ENCODE measurements at regions of chr5 and their contacts with region 1.

Region 1: DNA sequence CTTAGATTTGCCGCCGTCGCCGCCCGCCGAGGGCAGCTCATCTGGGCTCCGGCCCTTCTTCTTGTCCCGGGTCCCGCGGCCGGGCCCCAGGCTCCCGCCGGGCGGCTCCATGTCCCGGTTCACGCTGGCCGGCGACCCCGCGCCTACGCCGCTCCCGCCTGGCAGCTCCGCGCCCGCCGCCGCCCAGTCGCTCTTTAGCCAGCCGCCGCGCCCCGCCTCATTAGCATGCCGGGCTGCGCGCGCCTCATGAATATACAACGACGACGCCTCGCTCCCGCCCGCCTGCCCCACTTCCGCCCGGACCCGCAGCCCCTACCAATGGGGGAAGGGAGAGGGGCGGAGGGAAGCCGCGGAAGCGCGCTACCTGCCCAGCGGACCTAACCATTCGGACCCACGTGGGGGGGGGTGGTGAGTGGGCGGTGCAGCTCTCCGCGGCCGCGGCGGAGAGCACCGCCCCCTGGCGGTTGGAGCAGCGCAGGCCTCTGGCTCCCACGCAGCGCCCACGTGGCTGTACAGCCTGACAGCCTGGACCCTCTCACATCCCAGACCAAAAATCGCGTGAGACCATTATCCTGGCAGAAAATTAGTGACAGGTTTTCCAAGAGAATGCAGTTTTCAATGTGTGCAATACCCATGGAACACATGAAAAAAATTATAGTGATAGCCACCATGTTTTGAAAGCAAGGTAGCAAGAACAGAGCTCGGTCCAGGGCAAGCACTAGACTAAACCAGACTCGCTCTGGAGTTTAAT is at the start of gene DIAPH1:
- DNase-seq: peak; percentile 88
- H3K4me3 ChIP-seq: peak within 1 kb of the TSS; percentile 74
- H3K27ac ChIP-seq: peak within 1 kb of the TSS; percentile 47
- H3K27me3 ChIP-seq: no peaks in the 10 kb centered on the region
- CTCF ChIP-seq: peak; percentile 99
- polyA plus RNA-seq, gene DIAPH1: 27.1 and 34.7 TPM in 2 replicates

Region 2: DNA sequence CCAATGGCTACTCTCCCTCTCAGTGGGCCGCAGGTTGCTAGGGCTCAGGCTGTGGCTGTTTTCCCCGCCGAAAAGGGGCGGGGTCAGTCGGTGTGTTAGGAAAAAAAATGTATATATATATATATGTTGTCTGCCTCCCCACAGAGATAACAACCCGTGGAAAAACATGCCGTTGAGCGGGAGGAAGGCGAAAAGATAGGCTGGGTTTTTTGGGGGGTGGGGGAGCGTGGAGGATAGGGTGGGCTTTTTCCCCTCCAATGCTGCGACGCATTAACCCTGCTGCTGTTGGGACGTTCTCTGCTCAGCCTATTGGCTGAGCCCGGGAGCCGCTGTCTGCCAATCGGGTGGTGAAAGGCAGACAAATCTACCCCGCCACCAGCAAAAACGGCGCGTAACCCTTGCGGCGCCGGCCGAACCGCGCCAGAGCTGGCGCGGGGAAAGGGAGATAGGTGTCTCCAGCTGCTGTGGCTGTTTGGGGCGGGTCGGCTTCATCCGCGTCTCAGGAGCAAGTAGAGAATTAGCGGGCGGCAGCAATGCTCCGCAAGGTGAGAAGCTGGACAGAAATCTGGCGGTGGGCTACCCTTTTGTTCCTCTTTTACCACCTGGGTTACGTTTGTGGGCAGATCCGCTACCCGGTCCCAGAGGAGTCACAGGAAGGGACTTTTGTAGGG is 134.2 kb before region 1 on chr5 and contains the start of gene PCDHGC4:
- CTCF ChIA-PET with region 1: no interaction called
- POLR2A ChIA-PET with region 1: no interaction called
- DNase-seq: no peak
- H3K4me3 ChIP-seq: 0 out of 2 replicates have a peak within 1 kb of the TSS, but pooled peaks have one; percentile 4
- H3K27ac ChIP-seq: no peak within 1 kb of the TSS
- H3K27me3 ChIP-seq: no peaks in the 10 kb centered on the region
- CTCF ChIP-seq: no peak
- polyA plus RNA-seq, gene PCDHGC4: 0.46 and 0.83 TPM in 2 replicates

Region 3: DNA sequence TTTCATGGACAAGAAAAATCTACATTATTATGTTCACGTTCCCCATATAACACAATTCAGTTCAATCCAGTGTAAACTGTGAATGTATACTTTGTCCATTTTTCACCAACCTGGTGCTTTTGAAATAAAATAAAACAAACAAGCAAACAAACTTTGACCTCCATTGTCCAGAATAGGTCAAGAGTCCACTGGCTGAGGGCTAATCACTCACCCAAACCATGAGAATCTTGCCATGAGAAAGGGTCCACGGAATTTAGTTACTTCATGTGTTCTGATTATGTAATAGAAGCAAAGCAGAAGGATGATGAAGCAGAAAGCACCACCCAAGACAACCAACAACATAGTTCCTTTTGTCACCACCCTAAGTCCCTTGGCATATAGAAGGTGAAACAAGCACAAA is 28.9 kb before region 1 on chr5:
- CTCF ChIA-PET with region 1: interaction called, 465 read pairs
- POLR2A ChIA-PET with region 1: interaction called, 34 read pairs
- DNase-seq: no peak
- H3K4me3 ChIP-seq: no peak overlapping the region
- H3K27ac ChIP-seq: no peak overlapping the region
- H3K27me3 ChIP-seq: no peaks in the 10 kb centered on the region
- CTCF ChIP-seq: no peak

Region 4: DNA sequence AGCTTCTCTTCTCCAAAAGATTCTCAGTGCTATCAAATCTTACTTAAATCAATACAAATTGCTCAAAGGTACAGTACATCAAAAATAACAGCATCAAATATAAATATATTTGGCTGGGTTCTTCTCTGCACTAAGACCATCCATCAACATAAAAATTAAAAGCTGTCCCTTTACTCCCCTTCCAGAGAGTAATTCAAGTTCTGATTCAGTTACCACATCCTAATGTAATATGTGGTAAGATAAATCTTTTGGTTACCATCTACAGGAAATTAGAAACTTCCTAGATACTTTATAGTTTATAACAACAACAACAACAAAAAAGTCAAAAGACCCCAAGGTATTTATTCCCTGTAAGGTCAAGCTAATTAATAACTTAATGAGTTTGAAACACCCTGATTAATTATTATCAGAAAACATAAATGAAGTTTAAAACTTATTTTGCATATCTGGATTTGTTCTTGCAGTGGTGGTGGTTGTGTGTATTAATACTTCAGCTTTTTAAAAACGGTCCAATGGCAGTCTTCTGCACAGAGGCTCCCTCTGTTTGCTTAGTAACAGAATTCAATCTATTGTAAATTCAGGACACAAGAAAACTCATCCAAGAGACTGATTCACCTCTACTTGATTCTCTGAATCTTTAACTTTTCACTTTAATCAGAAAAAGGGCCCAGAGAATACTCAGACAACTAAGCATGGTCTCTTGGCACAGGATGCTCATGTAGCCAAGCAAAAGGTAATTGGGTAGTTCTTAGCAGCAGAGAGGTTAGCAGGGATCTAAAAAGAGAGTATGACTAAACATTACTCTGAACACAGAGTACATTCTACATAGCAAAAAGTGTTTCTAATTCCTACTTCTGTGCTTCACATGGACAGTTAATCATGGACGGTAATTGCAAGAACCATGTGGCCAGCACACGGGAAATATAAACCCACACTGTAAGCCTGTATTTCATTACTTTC is 20.3 kb before region 1 on chr5:
- CTCF ChIA-PET with region 1: interaction called, 465 read pairs
- POLR2A ChIA-PET with region 1: interaction called, 6 read pairs
- DNase-seq: no peak
- H3K4me3 ChIP-seq: no peak overlapping the region
- H3K27ac ChIP-seq: no peak overlapping the region
- H3K27me3 ChIP-seq: no peaks in the 10 kb centered on the region
- CTCF ChIP-seq: no peak

Region 5: GRCh38 chr5:141605523-141606277 is 13.3 kb before region 1 on chr5:
- CTCF ChIA-PET with region 1: interaction called, 65 read pairs
- POLR2A ChIA-PET with region 1: interaction called, 6 read pairs
- DNase-seq: no peak
- H3K4me3 ChIP-seq: no peak overlapping the region
- H3K27ac ChIP-seq: no peak overlapping the region
- H3K27me3 ChIP-seq: no peaks in the 10 kb centered on the region
- CTCF ChIP-seq: no peak

Region 6: DNA sequence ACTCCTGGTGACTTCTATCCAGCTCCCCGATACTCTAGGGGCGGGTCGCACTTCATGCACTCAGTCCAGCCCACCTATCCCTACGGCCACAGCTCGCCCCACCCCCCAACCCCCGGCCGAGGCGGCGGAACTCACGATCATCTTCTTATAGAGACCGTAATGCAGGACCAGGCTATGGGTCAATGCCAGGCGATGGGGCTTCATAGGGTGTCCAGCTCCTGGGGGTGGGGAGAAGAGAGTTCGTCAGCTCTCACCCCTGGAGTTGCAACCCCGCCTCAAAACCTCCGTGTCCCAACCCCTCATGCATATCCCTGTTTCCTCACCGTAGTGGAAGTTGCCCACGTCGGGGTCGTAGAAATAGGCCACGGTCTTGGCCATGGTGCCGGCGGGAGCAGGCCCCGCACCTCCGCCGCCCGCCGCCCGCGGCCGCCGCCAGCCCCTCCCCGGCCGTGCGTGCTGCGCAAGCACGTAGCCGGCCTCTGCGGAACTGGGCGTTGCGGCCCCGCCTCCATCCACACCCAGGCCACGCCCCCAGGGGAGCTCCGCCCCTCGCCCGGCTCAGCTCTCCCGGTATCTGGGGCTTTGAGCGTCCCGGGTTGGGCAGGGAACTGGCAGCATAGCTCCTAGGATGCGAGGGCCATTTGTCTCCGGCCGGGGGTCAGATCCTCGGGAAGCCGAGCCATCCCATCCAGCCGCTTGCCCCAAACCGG is 17.6 kb after region 1 on chr5 and contains the starts of genes HDAC3 and RELL2:
- CTCF ChIA-PET with region 1: interaction called, 175 read pairs
- POLR2A ChIA-PET with region 1: interaction called, 28 read pairs
- DNase-seq: peak; percentile 57
- H3K4me3 ChIP-seq: peak within 1 kb of the TSS; percentile 77
- H3K27ac ChIP-seq: no peak within 1 kb of the TSS
- H3K27me3 ChIP-seq: no peaks in the 10 kb centered on the region
- CTCF ChIP-seq: no peak
- polyA plus RNA-seq, gene HDAC3: 78.3 and 82.2 TPM in 2 replicates
- polyA plus RNA-seq, gene RELL2: 3.0 and 3.1 TPM in 2 replicates

Region 7: GRCh38 chr5:141650851-141651727 is 32.1 kb after region 1 on chr5 and contains the start of gene FCHSD1:
- CTCF ChIA-PET with region 1: interaction called, 15 read pairs
- POLR2A ChIA-PET with region 1: no interaction called
- DNase-seq: peak; percentile 50
- H3K4me3 ChIP-seq: peak within 1 kb of the TSS; percentile 85
- H3K27ac ChIP-seq: no peak within 1 kb of the TSS
- H3K27me3 ChIP-seq: no peaks in the 10 kb centered on the region
- CTCF ChIP-seq: no peak
- polyA plus RNA-seq, gene FCHSD1: 28.1 and 30.2 TPM in 2 replicates

Region 8: GRCh38 chr5:141681695-141682641 is 63.0 kb after region 1 on chr5 and contains the start of gene ARAP3:
- CTCF ChIA-PET with region 1: no interaction called
- POLR2A ChIA-PET with region 1: no interaction called
- DNase-seq: peak; percentile 43
- H3K4me3 ChIP-seq: peak within 1 kb of the TSS; percentile 54
- H3K27ac ChIP-seq: peak within 1 kb of the TSS; percentile 77
- H3K27me3 ChIP-seq: no peaks in the 10 kb centered on the region
- CTCF ChIP-seq: no peak
- polyA plus RNA-seq, gene ARAP3: 3.5 and 4.9 TPM in 2 replicates

Measured in AG04450 (cell line).